CD14-positive monocyte (primary cell): ENCODE measurements at regions of chr16 and their contacts with region 1.

Region 1: DNA sequence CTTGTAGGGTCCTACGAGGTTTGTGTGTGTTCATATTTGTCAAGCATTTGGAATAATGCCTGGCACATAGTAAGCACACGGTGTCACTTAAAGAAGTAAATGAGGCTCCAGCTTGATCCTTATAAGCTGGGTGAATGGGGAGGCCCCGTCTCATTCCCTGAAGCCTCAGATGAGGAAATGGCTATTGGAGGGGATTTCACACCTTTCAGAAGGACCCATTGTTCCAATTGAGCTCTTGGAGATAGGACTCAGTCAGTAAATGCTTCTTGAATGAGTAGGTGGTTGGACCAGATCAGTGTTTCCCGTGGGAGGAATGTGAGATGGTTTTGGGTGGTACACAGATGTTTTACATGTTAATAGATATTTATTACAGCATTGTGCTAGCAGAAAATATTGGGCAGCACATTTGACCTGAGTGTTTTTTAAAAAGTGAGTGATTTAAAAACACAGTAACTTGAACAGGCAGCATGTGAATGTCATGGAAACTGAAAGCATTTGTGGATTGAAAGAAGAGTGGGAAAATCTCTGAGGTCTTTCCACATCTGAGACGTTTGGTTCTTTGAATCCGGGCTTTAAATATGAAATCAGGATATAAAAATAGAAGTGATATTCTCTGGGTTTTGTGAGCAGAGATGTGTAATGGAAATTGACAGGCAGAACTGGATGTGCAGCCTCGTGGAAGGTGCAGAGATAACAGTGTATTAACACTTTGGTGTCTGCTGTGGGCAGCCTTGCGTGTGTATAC is 36.4 kb upstream of the ARHGAP17 start:
- DNase-seq: peak in 1 of 3 donors; percentile 38
- H3K4me3 ChIP-seq: no peak overlapping the region
- H3K4me3 Mint-ChIP-seq: no peak overlapping the region
- H3K27ac ChIP-seq: no peak overlapping the region
- H3K27ac Mint-ChIP-seq: no peak overlapping the region
- H3K4me1 ChIP-seq: peaks cover 18 to 35% of the 10 kb centered on the region in 2 donors
- H3K4me1 Mint-ChIP-seq: peaks cover 39% of the 10 kb centered on the region
- H3K27me3 ChIP-seq: no peaks in the 10 kb centered on the region
- H3K27me3 Mint-ChIP-seq: peaks cover 0 to 1% (median 0%) of the 10 kb centered on the region in 3 donors
- CTCF ChIP-seq: no peak

Region 2: DNA sequence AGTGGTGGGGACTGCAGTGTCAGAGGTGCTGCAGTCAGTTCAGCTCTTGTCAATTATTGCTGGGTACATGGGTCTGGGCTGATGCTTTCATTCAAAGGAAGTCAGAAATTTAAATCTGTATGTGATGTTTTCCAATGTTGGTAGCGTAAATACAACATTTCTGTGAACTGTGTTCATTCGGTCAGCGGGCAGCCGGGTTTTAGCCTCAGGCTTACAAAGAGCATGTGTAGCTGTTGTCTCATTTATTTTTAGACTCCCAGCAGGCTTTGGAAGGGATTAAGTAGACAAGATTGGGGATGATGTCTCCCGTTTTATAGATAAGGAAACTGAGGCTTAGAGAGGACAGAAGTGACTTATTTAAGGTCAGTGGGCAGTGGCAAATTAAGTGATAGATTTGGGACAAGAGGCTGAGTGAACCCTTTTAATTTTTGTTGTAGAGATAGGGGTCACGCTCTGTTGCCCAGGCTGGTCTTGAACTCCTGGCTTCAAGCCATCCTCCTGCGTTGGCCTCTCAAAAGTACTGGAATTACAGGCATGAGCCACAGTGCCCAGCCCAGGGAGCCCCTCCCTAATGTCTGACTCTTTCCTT is 173.2 kb after region 1 on chr16:
- intact Hi-C with region 1: loop called (anchors 2 to 10 kb)
- DNase-seq: no peak
- H3K4me3 ChIP-seq: no peak overlapping the region
- H3K4me3 Mint-ChIP-seq: no peak overlapping the region
- H3K27ac ChIP-seq: no peak overlapping the region
- H3K27ac Mint-ChIP-seq: peak overlapping the region in 1 of 7 donors; percentile 12
- H3K4me1 ChIP-seq: no peaks in the 10 kb centered on the region
- H3K4me1 Mint-ChIP-seq: no peaks in the 10 kb centered on the region
- H3K27me3 ChIP-seq: no peaks in the 10 kb centered on the region
- H3K27me3 Mint-ChIP-seq: peaks cover 0 to 3% (median 3%) of the 10 kb centered on the region in 3 donors
- CTCF ChIP-seq: no peak

Region 3: DNA sequence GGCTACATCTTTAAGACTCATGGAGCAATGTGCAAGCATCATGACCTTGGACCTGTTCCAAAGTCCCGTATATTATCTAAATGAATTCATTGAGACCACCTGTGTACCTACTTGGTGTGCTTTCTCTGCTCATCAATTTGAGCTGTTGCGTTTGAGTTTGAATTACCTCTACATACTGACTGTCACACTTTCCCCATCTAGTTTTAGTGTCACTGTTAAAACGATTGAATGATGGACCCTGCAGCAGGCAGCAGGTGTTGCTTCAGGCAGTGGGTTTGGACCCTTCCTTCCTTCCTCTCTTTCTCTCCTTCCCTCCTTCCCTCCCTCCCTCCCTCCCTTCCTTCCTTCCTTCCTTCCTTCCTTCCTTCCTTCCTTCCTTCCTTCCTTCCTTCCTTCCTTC is 240.0 kb after region 1 on chr16:
- intact Hi-C with region 1: no loop called
- DNase-seq: no peak
- H3K4me3 ChIP-seq: no peak overlapping the region
- H3K4me3 Mint-ChIP-seq: no peak overlapping the region
- H3K27ac ChIP-seq: no peak overlapping the region
- H3K27ac Mint-ChIP-seq: no peak overlapping the region
- H3K4me1 ChIP-seq: no peaks in the 10 kb centered on the region
- H3K4me1 Mint-ChIP-seq: no peaks in the 10 kb centered on the region
- H3K27me3 ChIP-seq: no peaks in the 10 kb centered on the region
- H3K27me3 Mint-ChIP-seq: peaks cover 0 to 4% (median 3%) of the 10 kb centered on the region in 3 donors
- CTCF ChIP-seq: no peak